ENCODE measurements at regions of chr1 and their contacts with region 1.

Region 1: GRCh38 chr1:84698151-84699110 is 8.2 kb upstream of the SSX2IP start:
- DNase-seq: peak; percentile 90
- ATAC-seq: peak; percentile 93
- H3K4me3 ChIP-seq: peak overlapping the region; percentile 17; the same call in 1 of the 2 replicates
- H3K27ac ChIP-seq: peak overlapping the region; percentile 73
- H3K4me1 ChIP-seq: peaks cover 21% of the 10 kb centered on the region
- H3K27me3 ChIP-seq: no peaks in the 10 kb centered on the region
- CTCF ChIP-seq: no peak

Region 2: GRCh38 chr1:84726593-84727499 is 28.4 kb after region 1 on chr1:
- CTCF ChIA-PET with region 1: no interaction called
- POLR2A ChIA-PET with region 1: interaction called, 4 read pairs
- intact Hi-C with region 1: loop called (anchors 2 kb)
- DNase-seq: peak; percentile 50
- ATAC-seq: peak; percentile 74
- H3K4me3 ChIP-seq: no peak overlapping the region
- H3K27ac ChIP-seq: no peak overlapping the region
- H3K4me1 ChIP-seq: peaks cover 15% of the 10 kb centered on the region
- H3K27me3 ChIP-seq: no peaks in the 10 kb centered on the region
- CTCF ChIP-seq: no peak

Measured in PC-3 (cell line).